Naive thymus-derived CD4-positive, alpha-beta T cell (primary cell): ENCODE measurements at regions of chr7 and their contacts with region 1.

Region 1: DNA sequence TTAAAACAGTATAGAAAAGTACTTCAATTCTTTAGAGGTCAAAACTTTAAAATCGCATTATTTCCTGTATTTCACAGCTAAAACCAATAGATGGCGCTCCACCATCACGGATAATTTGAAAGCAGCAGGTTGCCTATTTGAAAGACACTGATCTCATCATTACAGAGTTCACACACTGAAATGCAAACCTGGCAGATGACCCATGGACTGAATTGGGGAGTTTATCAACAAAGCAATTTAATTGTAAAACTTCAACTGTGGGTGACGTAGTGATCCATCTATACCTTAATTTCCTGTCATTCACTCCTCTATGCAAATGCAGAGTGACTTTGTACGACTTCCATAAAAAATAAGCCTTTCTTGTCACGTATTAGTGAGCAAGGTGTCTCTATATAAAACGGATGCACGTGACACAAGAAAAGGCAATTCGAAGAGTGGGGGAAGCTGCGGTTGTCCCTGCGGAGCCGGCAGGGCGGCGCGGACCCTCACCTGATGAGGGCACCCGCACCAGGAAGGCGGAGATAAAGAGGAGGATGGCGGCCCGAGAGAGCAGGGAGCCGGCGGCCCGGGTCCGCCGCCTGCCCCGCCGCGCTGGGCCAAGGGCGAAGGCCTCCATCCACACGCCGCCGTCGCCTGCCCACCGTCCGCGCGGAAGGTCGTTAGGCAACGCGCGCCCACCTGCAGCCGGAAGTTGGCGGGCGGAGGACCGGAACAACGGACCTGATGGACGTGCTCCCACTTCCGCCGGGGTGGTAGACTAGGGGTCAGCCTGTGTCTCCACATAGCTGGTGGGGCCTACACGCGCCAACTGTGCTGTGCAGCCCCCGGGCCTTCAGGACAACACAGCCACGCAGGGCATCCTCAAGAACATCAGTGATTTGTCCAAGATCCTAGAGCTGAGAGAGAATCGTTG is at the start of gene ZPBP:
- DNase-seq: peak in 8 of 9 donors; percentile 34 to 77 (median 70)
- ATAC-seq: peak; percentile 88
- H3K4me3 ChIP-seq: peak within 1 kb of the TSS; percentile 59
- H3K4me3 Mint-ChIP-seq: peak within 1 kb of the TSS; percentile 85 to 96 (median 89)
- H3K27ac ChIP-seq: peak within 1 kb of the TSS; percentile 62
- H3K27ac Mint-ChIP-seq: peak within 1 kb of the TSS; percentile 62 to 93 (median 88)
- H3K4me1 ChIP-seq: no peaks in the 10 kb centered on the region
- H3K4me1 Mint-ChIP-seq: peaks cover 8 to 22% (median 10%) of the 10 kb centered on the region in 7 donors
- H3K27me3 ChIP-seq: no peaks in the 10 kb centered on the region
- H3K27me3 Mint-ChIP-seq: peaks cover 0 to 27% (median 0%) of the 10 kb centered on the region in 5 donors
- total RNA-seq, gene ZPBP: not detected

Region 2: DNA sequence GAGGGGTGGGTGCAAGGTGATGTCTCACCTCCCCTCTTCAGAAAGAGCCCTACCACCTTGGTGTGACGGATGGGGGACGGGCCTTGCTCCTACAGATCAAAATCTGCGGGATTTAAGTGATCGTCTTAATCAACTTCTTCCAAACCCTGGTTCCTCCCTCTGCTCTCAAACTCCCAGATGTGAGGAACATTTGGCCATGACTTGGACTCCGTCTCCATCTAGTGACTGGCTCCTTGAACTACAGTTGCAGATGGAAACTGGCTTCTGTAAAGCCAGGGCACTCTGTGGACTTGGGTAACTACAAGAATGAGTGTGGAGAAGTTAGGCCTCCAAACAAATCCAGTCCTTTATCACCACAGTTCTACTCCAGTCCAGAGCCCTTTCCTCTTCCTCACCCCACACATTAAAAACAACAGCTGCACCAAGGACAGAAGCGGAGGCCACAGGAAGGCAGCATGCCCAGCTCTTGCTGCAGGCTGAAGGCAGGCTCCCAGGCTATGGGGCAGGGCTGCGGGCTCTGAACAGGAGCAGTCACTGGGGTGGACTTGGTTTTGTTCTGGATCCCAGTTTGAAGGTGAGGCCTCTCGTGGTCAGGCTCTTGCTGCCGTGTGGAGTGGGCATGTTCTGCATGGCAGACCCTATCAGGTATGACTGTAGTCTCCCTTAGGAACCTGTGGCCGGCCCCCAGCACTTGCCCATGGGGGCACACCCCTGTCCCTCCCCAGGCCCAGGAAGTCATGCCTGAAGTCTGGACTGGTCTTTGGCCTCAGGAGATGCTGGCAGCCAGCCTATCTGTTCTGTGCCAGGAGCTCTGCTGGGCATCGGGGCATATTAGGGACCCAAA is 240.0 kb before region 1 on chr7:
- CTCF ChIA-PET with region 1: no interaction called
- POLR2A ChIA-PET with region 1: no interaction called
- intact Hi-C with region 1: no loop called
- DNase-seq: peak in 2 of 9 donors; percentile 6
- ATAC-seq: no peak
- H3K4me3 ChIP-seq: no peak overlapping the region
- H3K4me3 Mint-ChIP-seq: no peak overlapping the region
- H3K27ac ChIP-seq: no peak overlapping the region
- H3K27ac Mint-ChIP-seq: no peak overlapping the region
- H3K4me1 ChIP-seq: no peaks in the 10 kb centered on the region
- H3K4me1 Mint-ChIP-seq: no peaks in the 10 kb centered on the region
- H3K27me3 ChIP-seq: no peaks in the 10 kb centered on the region
- H3K27me3 Mint-ChIP-seq: peaks cover 0 to 13% (median 12%) of the 10 kb centered on the region in 5 donors

Region 3: DNA sequence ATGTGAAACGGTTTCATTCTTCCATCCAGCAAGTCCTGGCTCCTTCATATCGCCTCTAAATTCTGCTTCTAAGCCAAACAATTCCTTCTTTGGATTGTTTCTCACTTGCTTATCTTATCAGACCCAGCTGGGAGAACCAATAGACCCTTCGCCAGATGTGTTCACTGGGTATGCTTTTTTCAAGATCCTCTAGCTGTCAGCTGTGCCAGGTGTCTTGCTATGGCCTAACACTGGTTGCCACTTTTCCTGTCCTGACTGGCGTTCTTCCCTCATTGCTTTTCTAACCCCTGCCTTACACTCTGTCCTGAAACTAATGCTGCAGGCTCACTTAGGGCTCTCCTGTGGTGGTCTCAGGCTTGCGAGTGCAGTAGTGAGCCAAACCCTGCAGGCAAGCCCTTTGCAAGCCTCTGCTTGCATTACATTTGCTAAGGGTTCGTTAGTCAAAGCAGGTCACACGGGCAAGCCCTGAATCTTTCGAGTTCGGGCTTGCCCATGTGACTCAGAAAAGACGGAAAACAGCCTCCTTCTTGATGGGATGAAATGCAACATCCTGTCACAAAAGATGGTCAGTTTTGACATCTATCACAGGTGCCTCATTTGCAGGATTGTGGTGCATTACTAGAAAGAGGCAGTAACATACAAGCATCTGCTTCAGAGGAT is 226.6 kb before region 1 on chr7:
- CTCF ChIA-PET with region 1: no interaction called
- POLR2A ChIA-PET with region 1: no interaction called
- intact Hi-C with region 1: no loop called
- DNase-seq: no peak
- ATAC-seq: no peak
- H3K4me3 ChIP-seq: no peak overlapping the region
- H3K4me3 Mint-ChIP-seq: no peak overlapping the region
- H3K27ac ChIP-seq: no peak overlapping the region
- H3K27ac Mint-ChIP-seq: no peak overlapping the region
- H3K4me1 ChIP-seq: no peaks in the 10 kb centered on the region
- H3K4me1 Mint-ChIP-seq: no peaks in the 10 kb centered on the region
- H3K27me3 ChIP-seq: no peaks in the 10 kb centered on the region
- H3K27me3 Mint-ChIP-seq: peaks cover 0 to 27% (median 18%) of the 10 kb centered on the region in 5 donors

Region 4: GRCh38 chr7:50142425-50143017 is 49.7 kb after region 1 on chr7:
- CTCF ChIA-PET with region 1: interaction called, 4 read pairs
- POLR2A ChIA-PET with region 1: no interaction called
- intact Hi-C with region 1: loop called (anchors 1 to 2 kb)
- DNase-seq: peak in 7 of 9 donors; percentile 43 to 72 (median 62)
- ATAC-seq: peak; percentile 83
- H3K4me3 ChIP-seq: no peak overlapping the region
- H3K4me3 Mint-ChIP-seq: peak overlapping the region in 9 of 10 donors; percentile 13 to 86 (median 64)
- H3K27ac ChIP-seq: peak overlapping the region; percentile 55
- H3K27ac Mint-ChIP-seq: peak overlapping the region in 8 of 9 donors; percentile 16 to 91 (median 62)
- H3K4me1 ChIP-seq: peaks cover 3% of the 10 kb centered on the region in 2 donors
- H3K4me1 Mint-ChIP-seq: peaks cover 0 to 37% (median 12%) of the 10 kb centered on the region in 7 donors
- H3K27me3 ChIP-seq: no peaks in the 10 kb centered on the region
- H3K27me3 Mint-ChIP-seq: peaks cover 0 to 18% (median 0%) of the 10 kb centered on the region in 5 donors

Region 5: GRCh38 chr7:50418086-50418515 is 325.3 kb after region 1 on chr7:
- CTCF ChIA-PET with region 1: interaction called, 33 read pairs
- POLR2A ChIA-PET with region 1: interaction called, 3 read pairs
- intact Hi-C with region 1: loop called (anchors 1 kb)
- DNase-seq: peak; percentile 31 to 68 (median 56)
- ATAC-seq: peak; percentile 91
- H3K4me3 ChIP-seq: no peak overlapping the region
- H3K4me3 Mint-ChIP-seq: no peak overlapping the region
- H3K27ac ChIP-seq: no peak overlapping the region
- H3K27ac Mint-ChIP-seq: peak overlapping the region in 1 of 9 donors; percentile 26
- H3K4me1 ChIP-seq: peaks cover 0 to 22% of the 10 kb centered on the region in 2 donors
- H3K4me1 Mint-ChIP-seq: peaks cover 5 to 35% (median 29%) of the 10 kb centered on the region in 7 donors
- H3K27me3 ChIP-seq: no peaks in the 10 kb centered on the region
- H3K27me3 Mint-ChIP-seq: no peaks in the 10 kb centered on the region

Region 6: GRCh38 chr7:50632561-50633413 is 540.0 kb after region 1 on chr7:
- CTCF ChIA-PET with region 1: interaction called, 9 read pairs
- POLR2A ChIA-PET with region 1: no interaction called
- intact Hi-C with region 1: loop called (anchors 1 kb)
- DNase-seq: peak; percentile 27 to 64 (median 52)
- ATAC-seq: peak; percentile 88
- H3K4me3 ChIP-seq: no peak overlapping the region
- H3K4me3 Mint-ChIP-seq: no peak overlapping the region
- H3K27ac ChIP-seq: no peak overlapping the region
- H3K27ac Mint-ChIP-seq: peak overlapping the region in 1 of 9 donors; percentile 29
- H3K4me1 ChIP-seq: no peaks in the 10 kb centered on the region
- H3K4me1 Mint-ChIP-seq: peaks cover 0 to 6% (median 0%) of the 10 kb centered on the region in 7 donors
- H3K27me3 ChIP-seq: no peaks in the 10 kb centered on the region
- H3K27me3 Mint-ChIP-seq: peaks cover 0 to 37% (median 0%) of the 10 kb centered on the region in 5 donors

Region 7: DNA sequence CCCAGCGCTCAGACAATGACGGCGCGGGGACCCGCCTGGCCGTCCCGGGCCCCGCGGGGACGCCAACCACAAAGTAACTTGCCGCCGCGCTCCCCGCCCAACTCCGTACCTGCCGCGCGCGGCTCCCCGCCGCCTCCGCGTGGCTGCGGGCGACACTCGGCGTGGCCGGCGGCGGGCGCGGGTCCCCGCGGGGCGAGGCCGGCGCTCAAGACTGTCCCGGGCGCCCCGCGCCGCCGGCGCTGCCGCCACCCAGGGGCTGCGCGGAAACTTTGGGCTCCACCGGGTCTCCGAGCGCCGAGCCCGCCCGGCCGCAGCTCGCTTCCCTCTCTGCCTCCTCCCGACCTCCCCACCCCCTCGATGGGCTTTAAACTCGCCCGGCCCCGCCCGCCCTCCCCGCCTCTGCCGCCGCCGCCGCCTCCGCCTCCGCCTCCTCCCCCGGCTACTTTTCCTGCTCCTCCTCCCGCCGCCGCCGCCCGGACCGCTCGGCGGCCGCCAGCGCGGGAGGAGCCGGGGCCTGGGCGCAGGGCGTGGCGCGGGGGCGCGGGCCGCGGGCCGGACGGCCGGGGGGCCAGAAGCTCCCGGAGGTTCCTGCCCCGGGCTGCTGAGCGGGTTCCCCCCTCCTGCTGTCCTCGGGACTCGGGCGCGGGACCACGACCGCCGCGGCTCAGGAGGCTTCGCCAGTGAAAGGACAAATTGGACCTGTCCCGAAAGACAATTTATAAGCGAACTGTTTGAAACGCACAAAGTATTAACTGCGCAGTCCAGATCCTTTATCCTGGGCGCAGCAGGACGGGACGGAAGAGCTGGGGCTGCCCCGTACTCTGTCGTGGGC is 700.5 kb after region 1 on chr7:
- CTCF ChIA-PET with region 1: no interaction called
- POLR2A ChIA-PET with region 1: no interaction called
- intact Hi-C with region 1: loop called in 1 of 2 experiments (anchors 5 kb)
- DNase-seq: peak in 8 of 9 donors; percentile 17 to 43 (median 34)
- ATAC-seq: peak; percentile 68
- H3K4me3 ChIP-seq: no peak overlapping the region
- H3K4me3 Mint-ChIP-seq: peak overlapping the region; percentile 52 to 89 (median 77)
- H3K27ac ChIP-seq: no peak overlapping the region
- H3K27ac Mint-ChIP-seq: peak overlapping the region in 4 of 9 donors; percentile 6 to 87 (median 48)
- H3K4me1 ChIP-seq: peaks cover 0 to 3% of the 10 kb centered on the region in 2 donors
- H3K4me1 Mint-ChIP-seq: peaks cover 0 to 37% (median 16%) of the 10 kb centered on the region in 7 donors
- H3K27me3 ChIP-seq: peaks cover 0 to 4% of the 10 kb centered on the region in 2 donors
- H3K27me3 Mint-ChIP-seq: peaks cover 23 to 80% (median 34%) of the 10 kb centered on the region in 5 donors

Region 8: DNA sequence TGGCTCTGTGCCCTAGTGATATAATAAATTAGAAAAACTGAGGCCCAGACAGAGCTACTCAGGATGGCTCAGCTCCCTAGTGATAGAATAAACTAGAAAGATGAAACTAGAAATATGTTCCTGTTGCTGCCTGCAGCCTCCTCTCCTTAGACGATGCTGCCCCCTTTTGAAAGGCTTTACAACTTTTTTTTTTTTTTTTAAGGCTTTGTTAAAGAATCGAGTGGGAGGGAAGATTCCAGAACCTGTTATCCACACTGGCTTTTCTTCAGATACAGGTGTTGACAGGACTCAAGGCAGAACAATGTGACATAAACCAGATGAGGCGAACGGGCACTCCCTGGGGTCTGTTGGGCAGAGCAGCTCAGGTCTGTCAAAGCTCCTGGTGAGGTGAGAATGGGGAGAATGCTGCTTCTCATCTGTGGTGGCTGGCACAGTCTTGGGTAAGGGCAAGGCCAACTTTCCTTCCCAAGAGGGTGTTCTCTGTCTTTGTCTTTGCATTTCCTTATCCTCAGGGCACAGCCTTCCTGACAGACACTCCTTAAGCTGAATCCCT is 1048.7 kb after region 1 on chr7:
- CTCF ChIA-PET with region 1: no interaction called
- POLR2A ChIA-PET with region 1: no interaction called
- intact Hi-C with region 1: loop called in 1 of 2 experiments (anchors 5 kb)
- DNase-seq: peak in 4 of 9 donors; percentile 16 to 39 (median 26)
- ATAC-seq: peak; percentile 24
- H3K4me3 ChIP-seq: no peak overlapping the region
- H3K4me3 Mint-ChIP-seq: no peak overlapping the region
- H3K27ac ChIP-seq: no peak overlapping the region
- H3K27ac Mint-ChIP-seq: no peak overlapping the region
- H3K4me1 ChIP-seq: no peaks in the 10 kb centered on the region
- H3K4me1 Mint-ChIP-seq: peaks cover 0 to 17% (median 4%) of the 10 kb centered on the region in 7 donors
- H3K27me3 ChIP-seq: no peaks in the 10 kb centered on the region
- H3K27me3 Mint-ChIP-seq: peaks cover 0 to 10% (median 5%) of the 10 kb centered on the region in 5 donors

Region 9: GRCh38 chr7:51366930-51367613 is 1274.2 kb after region 1 on chr7:
- CTCF ChIA-PET with region 1: no interaction called
- POLR2A ChIA-PET with region 1: no interaction called
- intact Hi-C with region 1: loop called in 1 of 2 experiments (anchors 5 kb)
- DNase-seq: peak in 1 of 9 donors; percentile 12
- ATAC-seq: no peak
- H3K4me3 ChIP-seq: no peak overlapping the region
- H3K4me3 Mint-ChIP-seq: no peak overlapping the region
- H3K27ac ChIP-seq: no peak overlapping the region
- H3K27ac Mint-ChIP-seq: no peak overlapping the region
- H3K4me1 ChIP-seq: no peaks in the 10 kb centered on the region
- H3K4me1 Mint-ChIP-seq: no peaks in the 10 kb centered on the region
- H3K27me3 ChIP-seq: no peaks in the 10 kb centered on the region
- H3K27me3 Mint-ChIP-seq: peaks cover 0 to 6% (median 0%) of the 10 kb centered on the region in 5 donors